ENCODE measurements at regions of chr9 and their contacts with region 1.

Region 1: GRCh38 chr9:129884220-129885017 is 49.2 kb downstream of the USP20 start:
- DNase-seq: peak; percentile 95
- ATAC-seq: peak; percentile 84

Region 2: DNA sequence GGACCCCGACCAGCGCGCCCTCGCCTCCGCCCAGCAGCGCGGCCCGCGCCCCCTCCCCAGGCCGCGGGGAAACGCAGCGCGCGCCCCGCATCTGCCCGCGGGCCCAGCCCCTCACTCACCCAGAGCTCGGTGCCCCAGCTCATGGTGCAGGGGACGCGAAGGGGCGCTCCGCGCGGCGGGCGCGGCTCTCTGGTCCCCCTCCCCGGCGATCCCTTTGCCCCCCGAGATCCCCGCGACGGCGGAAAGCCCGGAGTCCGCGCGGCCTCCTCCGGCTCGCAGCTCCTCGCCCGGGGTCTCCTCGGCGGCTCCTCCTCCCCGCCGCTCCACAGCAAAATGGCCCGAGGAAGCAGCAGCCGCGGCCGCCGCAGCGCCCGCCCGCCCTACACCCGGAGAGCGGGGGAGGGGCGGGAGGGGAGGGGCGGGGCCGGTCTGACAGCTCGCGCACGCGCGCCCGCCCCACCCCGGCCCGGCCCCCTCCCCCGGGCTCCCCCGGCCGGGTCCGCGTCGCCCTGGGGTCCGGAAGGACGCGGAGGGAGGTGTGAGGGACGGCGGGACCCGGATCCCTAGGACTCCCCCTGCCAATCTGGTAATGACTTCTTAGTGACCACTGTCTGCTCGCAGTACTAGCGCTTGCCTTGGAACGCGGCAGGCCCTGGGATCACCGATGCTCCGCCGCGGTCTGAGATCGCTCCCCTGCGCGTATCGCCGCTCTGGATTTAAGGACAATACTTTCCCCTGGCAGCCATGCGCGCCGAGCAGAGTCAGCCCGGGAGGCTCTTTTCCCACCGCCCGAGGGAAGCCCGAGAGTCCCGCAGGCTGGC is 158.6 kb after region 1 on chr9 and contains the start of gene FNBP1:
- intact Hi-C with region 1: loop called (anchors 5 kb)
- DNase-seq: peak; percentile 90
- ATAC-seq: peak; percentile 97
- total RNA-seq, gene FNBP1: 21.5 TPM

Region 3: DNA sequence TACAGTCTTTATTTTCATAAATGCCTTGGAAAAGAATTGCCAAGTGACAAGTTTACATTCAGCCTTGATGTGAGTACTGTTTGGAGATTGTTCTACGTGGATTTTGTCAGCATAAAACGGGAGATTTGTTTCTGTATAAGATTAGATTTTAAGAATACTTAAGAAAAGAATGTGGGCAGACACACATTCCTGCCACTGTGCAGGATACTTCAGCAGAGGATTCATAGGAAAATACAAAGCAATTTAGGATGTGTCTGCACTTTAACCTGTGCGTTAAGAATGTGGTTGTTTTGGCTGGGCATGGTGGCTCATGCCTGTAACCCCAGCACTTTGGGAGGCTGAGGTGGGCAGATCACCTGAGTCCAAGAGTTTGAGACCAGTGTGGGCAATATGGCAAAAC is 206.5 kb after region 1 on chr9:
- intact Hi-C with region 1: loop called (anchors 10 kb)
- DNase-seq: no peak
- ATAC-seq: no peak

Region 4: DNA sequence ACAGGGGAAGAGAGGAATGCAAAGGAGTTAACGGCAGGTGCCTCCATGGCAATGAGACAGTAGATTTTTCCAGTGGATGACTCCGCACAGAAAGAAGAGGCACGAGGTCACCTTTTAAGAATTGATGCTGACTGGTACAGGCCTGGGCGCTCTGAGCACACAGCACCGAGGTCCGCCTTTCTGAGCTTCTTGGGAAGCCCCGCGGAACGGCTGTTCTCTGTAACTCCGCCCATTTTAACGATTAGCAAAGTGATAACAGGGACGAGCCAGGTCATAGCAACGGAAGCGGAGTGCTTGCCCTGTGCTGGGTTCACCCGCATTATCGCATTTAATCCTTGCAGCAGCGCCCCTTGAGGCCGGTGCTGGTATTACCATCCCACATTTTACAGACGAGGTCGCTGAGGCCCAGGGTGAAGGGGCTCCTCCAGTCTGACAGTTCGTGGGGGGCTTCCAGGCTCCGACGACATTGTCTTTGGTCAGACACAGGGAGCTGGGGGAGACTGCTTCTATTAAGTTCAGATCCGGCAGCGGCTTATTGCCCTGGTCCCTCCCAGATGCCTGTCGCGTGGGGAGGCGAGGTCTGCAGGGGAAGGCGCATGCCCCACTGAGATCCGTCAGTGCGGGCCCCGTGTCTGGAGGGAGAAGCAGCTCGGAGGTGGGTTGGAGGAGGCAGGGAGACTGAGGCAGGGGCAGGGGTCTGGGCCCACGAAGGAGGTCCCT is 358.8 kb after region 1 on chr9:
- intact Hi-C with region 1: loop called (anchors 5 kb)
- DNase-seq: peak; percentile 89
- ATAC-seq: peak; percentile 82